Naive thymus-derived CD4-positive, alpha-beta T cell (primary cell): ENCODE measurements at regions of chr7 and their contacts with region 1.

Region 1: GRCh38 chr7:92590711-92591310 is 621 bp upstream of the FAM133B start:
- DNase-seq: peak in 1 of 9 donors; percentile 11
- ATAC-seq: no peak
- H3K4me3 ChIP-seq: peak overlapping the region; percentile 77
- H3K4me3 Mint-ChIP-seq: peak overlapping the region; percentile 90 to 96 (median 94)
- H3K27ac ChIP-seq: peak overlapping the region; percentile 94
- H3K27ac Mint-ChIP-seq: peak overlapping the region in 8 of 9 donors; percentile 22 to 96 (median 76)
- H3K4me1 ChIP-seq: peaks cover 14 to 21% of the 10 kb centered on the region in 2 donors
- H3K4me1 Mint-ChIP-seq: peaks cover 27 to 46% (median 39%) of the 10 kb centered on the region in 7 donors
- H3K27me3 ChIP-seq: no peaks in the 10 kb centered on the region
- H3K27me3 Mint-ChIP-seq: peaks cover 0 to 4% (median 0%) of the 10 kb centered on the region in 5 donors

Region 2: DNA sequence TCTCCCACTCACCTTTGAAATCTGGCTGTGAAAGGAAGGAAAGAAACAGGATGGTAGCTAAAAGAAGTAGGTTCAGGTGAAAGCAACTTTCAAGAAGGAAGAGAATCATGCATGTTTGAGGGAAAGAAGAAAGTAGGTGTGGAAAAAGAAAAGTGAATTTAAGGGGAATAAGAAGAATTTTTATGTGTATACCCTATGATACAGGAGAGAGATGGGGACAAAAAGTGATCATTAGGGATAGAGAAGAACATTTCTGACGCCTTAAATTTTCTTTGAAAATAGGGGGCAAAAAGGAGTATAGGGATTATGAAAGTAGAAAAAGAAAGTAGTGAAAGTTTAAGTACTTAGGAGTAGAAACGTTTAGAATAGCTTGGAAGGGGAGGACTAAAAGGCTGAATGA is 360.3 kb before region 1 on chr7:
- CTCF ChIA-PET with region 1: no interaction called
- POLR2A ChIA-PET with region 1: no interaction called
- intact Hi-C with region 1: no loop called
- DNase-seq: no peak
- ATAC-seq: no peak
- H3K4me3 ChIP-seq: no peak overlapping the region
- H3K4me3 Mint-ChIP-seq: no peak overlapping the region
- H3K27ac ChIP-seq: no peak overlapping the region
- H3K27ac Mint-ChIP-seq: peak overlapping the region in 3 of 9 donors; percentile 2 to 21 (median 12)
- H3K4me1 ChIP-seq: no peaks in the 10 kb centered on the region
- H3K4me1 Mint-ChIP-seq: peaks cover 0 to 2% (median 0%) of the 10 kb centered on the region in 7 donors
- H3K27me3 ChIP-seq: no peaks in the 10 kb centered on the region
- H3K27me3 Mint-ChIP-seq: no peaks in the 10 kb centered on the region

Region 3: DNA sequence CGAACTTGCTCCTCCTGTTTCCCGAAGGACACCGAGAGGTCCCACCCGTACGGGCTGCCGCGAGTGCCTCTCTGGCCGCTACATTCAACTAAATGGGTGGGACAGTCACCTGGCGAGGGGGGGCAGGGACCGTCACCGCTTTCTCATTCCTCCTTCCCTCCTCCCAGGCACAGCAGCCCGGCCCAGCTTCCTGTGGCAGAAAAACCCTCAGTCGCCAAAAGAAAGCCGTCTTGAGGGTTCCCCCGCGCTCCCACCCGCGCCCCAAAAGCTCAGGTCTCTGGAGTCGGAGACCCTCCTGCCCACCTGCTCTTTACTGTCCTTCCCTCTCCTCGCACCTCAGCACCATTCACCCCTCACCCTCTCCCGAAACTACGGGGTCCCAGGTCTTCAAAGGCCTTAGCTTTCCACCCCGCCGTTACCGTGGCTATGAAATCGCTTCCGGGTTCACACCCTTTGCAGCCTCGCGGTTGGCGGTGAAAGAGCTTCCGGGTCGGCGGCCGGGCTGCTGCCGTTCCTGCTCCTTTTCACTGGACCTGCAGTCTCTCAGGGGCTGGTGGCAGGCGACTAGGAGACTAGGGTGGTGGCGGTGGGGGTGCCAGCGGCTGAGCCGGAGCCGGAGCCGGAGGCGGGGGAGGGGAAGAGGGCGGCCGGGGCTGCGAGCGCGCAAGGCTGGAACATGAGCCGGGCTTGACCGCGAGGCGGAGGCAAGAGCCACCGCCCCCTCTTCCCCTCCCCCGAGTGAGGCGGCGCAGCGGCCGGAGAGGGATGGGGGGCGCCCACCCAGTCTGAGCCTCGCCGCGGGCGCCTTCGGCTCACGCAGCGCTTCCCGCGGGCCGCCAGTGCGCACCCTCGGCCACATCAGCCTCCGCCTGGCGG is 345.1 kb before region 1 on chr7 and contains the starts of genes ANKIB1 and KRIT1:
- CTCF ChIA-PET with region 1: no interaction called
- POLR2A ChIA-PET with region 1: no interaction called
- intact Hi-C with region 1: loop called (anchors 1 to 2 kb)
- DNase-seq: peak; percentile 68 to 88 (median 86)
- ATAC-seq: peak; percentile 87
- H3K4me3 ChIP-seq: peak within 1 kb of the TSS; percentile 80
- H3K4me3 Mint-ChIP-seq: peak within 1 kb of the TSS; percentile 97 to 100 (median 98)
- H3K27ac ChIP-seq: peak within 1 kb of the TSS; percentile 92
- H3K27ac Mint-ChIP-seq: peak within 1 kb of the TSS; percentile 98 to 100 (median 100)
- H3K4me1 ChIP-seq: peaks cover 15 to 22% of the 10 kb centered on the region in 2 donors
- H3K4me1 Mint-ChIP-seq: peaks cover 30 to 64% (median 45%) of the 10 kb centered on the region in 7 donors
- H3K27me3 ChIP-seq: no peaks in the 10 kb centered on the region
- H3K27me3 Mint-ChIP-seq: no peaks in the 10 kb centered on the region
- total RNA-seq, gene ANKIB1: 54.8 to 98.6 (median 68.2) TPM
- total RNA-seq, gene KRIT1: 45.7 to 78.7 (median 48.6) TPM

Region 4: GRCh38 chr7:92517631-92518030 is 73.2 kb before region 1 on chr7:
- CTCF ChIA-PET with region 1: no interaction called
- POLR2A ChIA-PET with region 1: no interaction called
- intact Hi-C with region 1: no loop called
- DNase-seq: no peak
- ATAC-seq: no peak
- H3K4me3 ChIP-seq: no peak overlapping the region
- H3K4me3 Mint-ChIP-seq: no peak overlapping the region
- H3K27ac ChIP-seq: no peak overlapping the region
- H3K27ac Mint-ChIP-seq: peak overlapping the region in 2 of 9 donors; percentile 34 to 60
- H3K4me1 ChIP-seq: no peaks in the 10 kb centered on the region
- H3K4me1 Mint-ChIP-seq: peaks cover 0 to 3% (median 0%) of the 10 kb centered on the region in 7 donors
- H3K27me3 ChIP-seq: no peaks in the 10 kb centered on the region
- H3K27me3 Mint-ChIP-seq: no peaks in the 10 kb centered on the region

Region 5: GRCh38 chr7:92569134-92569533 is 21.7 kb before region 1 on chr7:
- CTCF ChIA-PET with region 1: no interaction called
- POLR2A ChIA-PET with region 1: interaction called, 3 read pairs
- intact Hi-C with region 1: loop called in 1 of 2 experiments (anchors 2 kb)
- DNase-seq: no peak
- ATAC-seq: no peak
- H3K4me3 ChIP-seq: no peak overlapping the region
- H3K4me3 Mint-ChIP-seq: no peak overlapping the region
- H3K27ac ChIP-seq: no peak overlapping the region
- H3K27ac Mint-ChIP-seq: peak overlapping the region in 2 of 9 donors; percentile 18 to 65
- H3K4me1 ChIP-seq: no peaks in the 10 kb centered on the region
- H3K4me1 Mint-ChIP-seq: peaks cover 0 to under 1% (median 0%) of the 10 kb centered on the region in 7 donors
- H3K27me3 ChIP-seq: no peaks in the 10 kb centered on the region
- H3K27me3 Mint-ChIP-seq: no peaks in the 10 kb centered on the region

Region 6: DNA sequence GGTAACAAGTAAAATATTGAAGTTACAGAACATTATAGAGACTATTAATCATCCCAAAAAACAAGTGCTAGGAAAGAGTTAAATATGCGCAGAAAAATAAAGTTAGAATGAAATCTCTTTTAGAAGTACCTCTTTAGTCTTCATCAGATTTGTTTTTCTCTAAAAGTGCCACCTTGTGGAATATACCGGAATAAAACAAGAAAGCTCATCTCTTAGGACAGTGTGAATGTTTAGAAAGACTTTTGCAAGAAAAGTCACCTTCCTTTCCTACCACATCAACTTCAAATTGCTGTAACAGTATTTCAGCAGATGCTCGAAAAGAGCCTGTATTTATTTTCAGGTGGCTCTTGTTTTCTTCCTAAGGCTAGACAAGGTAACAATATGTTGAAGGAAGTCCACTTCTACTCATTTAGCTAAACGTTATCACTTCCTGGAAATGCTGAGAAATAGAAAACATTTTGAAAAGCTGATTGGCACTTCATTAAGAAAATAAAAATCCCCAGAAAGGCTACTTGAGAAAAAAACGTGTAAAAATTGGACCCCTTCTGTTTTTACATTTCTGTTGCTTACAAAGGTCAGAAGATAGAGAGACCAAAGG is 19.2 kb after region 1 on chr7:
- CTCF ChIA-PET with region 1: interaction called, 4 read pairs
- POLR2A ChIA-PET with region 1: interaction called, 4 read pairs
- intact Hi-C with region 1: loop called in 1 of 2 experiments (anchors 1 kb)
- DNase-seq: peak in 3 of 9 donors; percentile 18 to 32 (median 23)
- ATAC-seq: peak; percentile 65
- H3K4me3 ChIP-seq: no peak overlapping the region
- H3K4me3 Mint-ChIP-seq: peak overlapping the region in 1 of 10 donors; percentile 16
- H3K27ac ChIP-seq: no peak overlapping the region
- H3K27ac Mint-ChIP-seq: peak overlapping the region in 6 of 9 donors; percentile 2 to 85 (median 58)
- H3K4me1 ChIP-seq: no peaks in the 10 kb centered on the region
- H3K4me1 Mint-ChIP-seq: peaks cover 0 to 26% (median 8%) of the 10 kb centered on the region in 7 donors
- H3K27me3 ChIP-seq: no peaks in the 10 kb centered on the region
- H3K27me3 Mint-ChIP-seq: no peaks in the 10 kb centered on the region

Region 7: GRCh38 chr7:93043385-93043985 is 452.7 kb after region 1 on chr7:
- CTCF ChIA-PET with region 1: no interaction called
- POLR2A ChIA-PET with region 1: no interaction called
- intact Hi-C with region 1: no loop called
- DNase-seq: no peak
- ATAC-seq: no peak
- H3K4me3 ChIP-seq: no peak overlapping the region
- H3K4me3 Mint-ChIP-seq: peak overlapping the region in 1 of 10 donors; percentile 8
- H3K27ac ChIP-seq: no peak overlapping the region
- H3K27ac Mint-ChIP-seq: no peak overlapping the region
- H3K4me1 ChIP-seq: no peaks in the 10 kb centered on the region
- H3K4me1 Mint-ChIP-seq: peaks cover 0 to 23% (median 0%) of the 10 kb centered on the region in 7 donors
- H3K27me3 ChIP-seq: peaks cover 5% of the 10 kb centered on the region in 2 donors
- H3K27me3 Mint-ChIP-seq: peaks cover 0 to under 1% (median 0%) of the 10 kb centered on the region in 5 donors

Region 8: DNA sequence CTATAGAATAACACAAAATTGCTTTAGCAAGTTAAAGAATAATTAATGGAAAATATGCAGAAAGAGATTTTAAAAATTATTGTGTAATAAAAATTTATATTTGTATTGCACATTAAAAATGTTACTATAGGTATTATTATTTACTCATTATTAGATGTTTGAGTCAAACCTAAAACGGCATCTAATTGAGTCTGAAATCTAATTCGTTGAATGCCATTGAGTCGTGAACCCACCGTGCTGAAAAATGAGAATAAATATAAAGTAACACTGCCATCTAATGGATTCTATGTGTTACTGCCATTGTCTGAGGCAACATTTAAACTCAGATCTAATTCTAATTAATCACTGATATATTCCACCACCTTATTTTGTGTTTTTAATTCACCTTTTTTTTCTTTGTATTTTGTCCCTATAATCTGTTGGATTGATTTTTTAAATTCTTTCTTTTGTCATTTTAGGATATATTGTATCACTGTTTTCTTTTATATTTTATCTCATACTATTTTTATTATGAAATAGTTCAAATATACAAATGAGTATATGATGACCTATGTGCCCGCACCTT is 464.8 kb after region 1 on chr7:
- CTCF ChIA-PET with region 1: no interaction called
- POLR2A ChIA-PET with region 1: interaction called, 3 read pairs
- intact Hi-C with region 1: loop called in 1 of 2 experiments (anchors 1 kb)
- DNase-seq: peak in 6 of 9 donors; percentile 14 to 57 (median 41)
- ATAC-seq: peak; percentile 77
- H3K4me3 ChIP-seq: no peak overlapping the region
- H3K4me3 Mint-ChIP-seq: no peak overlapping the region
- H3K27ac ChIP-seq: no peak overlapping the region
- H3K27ac Mint-ChIP-seq: no peak overlapping the region
- H3K4me1 ChIP-seq: no peaks in the 10 kb centered on the region
- H3K4me1 Mint-ChIP-seq: peaks cover 0 to 16% (median 7%) of the 10 kb centered on the region in 7 donors
- H3K27me3 ChIP-seq: no peaks in the 10 kb centered on the region
- H3K27me3 Mint-ChIP-seq: peaks cover 0 to 12% (median 6%) of the 10 kb centered on the region in 5 donors

Region 9: DNA sequence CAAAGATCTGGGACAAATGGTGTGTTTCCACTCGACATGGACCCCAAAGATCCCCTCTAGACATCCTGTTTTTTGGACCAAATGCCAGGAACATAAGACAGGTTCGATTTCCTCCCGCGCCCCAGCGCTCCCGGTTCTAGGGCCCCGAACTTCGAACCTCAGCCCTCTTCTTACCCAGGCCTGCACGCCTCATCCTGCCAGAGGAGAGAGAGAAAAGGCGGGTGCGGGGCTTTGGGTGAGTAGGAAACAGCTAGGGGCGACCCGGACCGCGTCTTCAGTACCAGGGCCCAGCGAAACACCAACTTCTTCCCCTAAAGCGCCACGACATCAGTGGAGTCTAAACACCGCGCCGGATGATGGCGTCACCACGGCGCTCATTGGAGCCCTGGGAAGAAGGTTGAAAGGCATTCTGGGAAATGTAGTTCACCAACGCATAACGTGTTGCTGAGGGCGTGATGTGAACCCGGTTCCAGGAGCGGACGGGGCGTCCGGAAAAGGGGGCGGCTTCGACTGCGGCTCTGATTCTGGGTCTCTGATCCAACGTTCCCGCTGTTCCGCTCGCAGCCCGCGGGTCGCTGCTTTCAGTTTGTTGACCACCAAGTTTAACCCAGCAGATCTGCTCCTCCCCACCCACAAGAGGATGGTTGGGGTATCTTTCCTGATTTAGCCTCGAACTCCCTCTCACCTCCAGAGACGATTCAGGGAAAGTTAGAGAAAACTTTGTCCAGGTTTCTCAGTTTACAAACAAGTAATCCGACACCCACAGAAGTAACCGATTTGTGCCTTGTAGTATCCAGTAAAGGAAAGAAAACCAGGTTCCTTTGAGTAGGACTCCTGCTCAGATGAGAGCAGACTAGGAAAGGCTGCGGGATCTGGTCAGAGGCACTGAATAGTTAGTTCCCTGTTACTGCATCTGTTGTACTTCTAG is 1413.5 kb after region 1 on chr7 and contains the start of gene BET1:
- CTCF ChIA-PET with region 1: no interaction called
- POLR2A ChIA-PET with region 1: no interaction called
- intact Hi-C with region 1: loop called in 1 of 2 experiments (anchors 1 kb)
- DNase-seq: peak; percentile 87 to 96 (median 92)
- ATAC-seq: peak; percentile 98
- H3K4me3 ChIP-seq: peak within 1 kb of the TSS; percentile 75
- H3K4me3 Mint-ChIP-seq: peak within 1 kb of the TSS; percentile 88 to 100 (median 99)
- H3K27ac ChIP-seq: peak within 1 kb of the TSS; percentile 91
- H3K27ac Mint-ChIP-seq: peak within 1 kb of the TSS; percentile 95 to 100 (median 99)
- H3K4me1 ChIP-seq: peaks cover 3 to 17% of the 10 kb centered on the region in 2 donors
- H3K4me1 Mint-ChIP-seq: peaks cover 22 to 56% (median 51%) of the 10 kb centered on the region in 7 donors
- H3K27me3 ChIP-seq: no peaks in the 10 kb centered on the region
- H3K27me3 Mint-ChIP-seq: peaks cover 0 to 28% (median 11%) of the 10 kb centered on the region in 5 donors
- total RNA-seq, gene BET1: 9.9 to 37.6 (median 25.2) TPM